KBM-7 (cell line): ENCODE measurements at regions of chr6 and their contacts with region 1.

Region 1: GRCh38 chr6:35731736-35732532 is 4.9 kb upstream of the ARMC12 start:
- DNase-seq: peak; percentile 89

Region 2: GRCh38 chr6:35302604-35303241 is 429.2 kb before region 1 on chr6:
- in situ Hi-C with region 1: loop called (anchors 25 kb)
- DNase-seq: peak; percentile 64

Region 3: GRCh38 chr6:35984701-35985100 is 252.8 kb after region 1 on chr6:
- in situ Hi-C with region 1: no loop called
- DNase-seq: no peak

Region 4: DNA sequence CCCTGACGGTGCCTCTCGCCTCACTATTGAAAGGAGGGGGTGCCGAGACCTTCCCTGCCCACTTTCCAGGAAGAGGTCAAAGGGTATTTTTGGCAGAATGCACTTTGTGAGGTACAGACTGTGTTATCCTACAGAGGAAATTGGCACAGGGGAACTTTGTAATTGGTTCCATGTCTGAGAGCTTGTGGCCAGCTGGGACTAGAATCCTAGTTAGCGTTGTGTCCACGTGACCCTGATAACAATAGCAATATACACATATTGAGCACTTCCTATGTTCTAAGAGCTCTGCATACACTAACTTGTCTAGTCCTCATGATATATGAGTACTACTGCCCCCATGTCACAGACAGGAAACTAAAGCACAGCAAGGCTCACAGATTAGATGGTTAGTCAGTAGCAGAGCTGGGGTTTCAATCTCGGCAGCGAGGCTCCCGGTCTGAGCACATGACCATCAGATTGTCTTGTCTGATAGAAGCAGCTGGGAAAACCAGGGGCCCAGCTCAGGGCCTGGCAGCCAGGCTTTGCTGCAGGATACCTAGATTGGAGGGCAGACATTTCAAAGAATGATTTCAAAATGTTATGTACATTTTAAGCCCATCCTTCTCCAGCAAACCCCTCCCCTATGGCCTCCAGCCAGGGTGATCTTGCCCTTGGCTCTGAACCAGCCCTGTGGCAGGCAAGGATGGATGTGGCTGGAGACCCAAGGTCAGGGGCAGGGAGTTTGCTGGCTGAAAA is 399.7 kb after region 1 on chr6:
- in situ Hi-C with region 1: no loop called
- DNase-seq: peak; percentile 30

Region 5: DNA sequence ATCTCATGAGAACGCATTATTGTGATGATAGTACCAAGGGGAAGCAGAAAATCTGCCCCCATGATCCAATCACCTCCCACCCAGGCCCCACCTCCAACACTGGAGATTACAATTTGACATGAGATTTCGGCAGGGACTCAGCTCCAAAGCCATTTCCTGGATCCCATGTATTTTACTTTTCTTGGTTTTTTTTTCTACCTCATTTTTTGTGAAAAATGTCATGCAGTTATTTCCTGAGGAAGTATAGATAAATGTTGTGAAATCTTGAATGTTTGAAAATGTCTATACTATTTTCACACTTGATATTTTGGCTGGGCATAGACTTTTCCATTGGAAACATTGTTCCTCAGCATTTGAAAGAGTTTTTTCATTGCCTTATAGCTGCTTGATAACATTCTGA is 455.5 kb after region 1 on chr6:
- in situ Hi-C with region 1: no loop called
- DNase-seq: peak; percentile 25